Mucosa of descending colon (tissue), 3 donors: ENCODE measurements at regions of chr2 and their contacts with region 1.

Region 1: GRCh38 chr2:36663851-36664695 is 32.4 kb upstream of the VIT start:
- DNase-seq: peak in 1 of 3 donors; percentile 53
- ATAC-seq: peak; percentile 85
- H3K4me3 ChIP-seq: no peak overlapping the region
- H3K4me1 ChIP-seq: no peaks in the 10 kb centered on the region
- CTCF ChIP-seq: peak; percentile 54

Region 2: GRCh38 chr2:36528274-36528673 is 135.8 kb before region 1 on chr2:
- intact Hi-C with region 1: loop called in 1 of 2 experiments (anchors 10 kb)
- DNase-seq: no peak
- ATAC-seq: no peak
- H3K4me3 ChIP-seq: no peak overlapping the region
- H3K4me1 ChIP-seq: peaks cover 6% of the 10 kb centered on the region
- CTCF ChIP-seq: no peak